MCF 10A (cell line): ENCODE measurements at regions of chr4 and their contacts with region 1.

Region 1: DNA sequence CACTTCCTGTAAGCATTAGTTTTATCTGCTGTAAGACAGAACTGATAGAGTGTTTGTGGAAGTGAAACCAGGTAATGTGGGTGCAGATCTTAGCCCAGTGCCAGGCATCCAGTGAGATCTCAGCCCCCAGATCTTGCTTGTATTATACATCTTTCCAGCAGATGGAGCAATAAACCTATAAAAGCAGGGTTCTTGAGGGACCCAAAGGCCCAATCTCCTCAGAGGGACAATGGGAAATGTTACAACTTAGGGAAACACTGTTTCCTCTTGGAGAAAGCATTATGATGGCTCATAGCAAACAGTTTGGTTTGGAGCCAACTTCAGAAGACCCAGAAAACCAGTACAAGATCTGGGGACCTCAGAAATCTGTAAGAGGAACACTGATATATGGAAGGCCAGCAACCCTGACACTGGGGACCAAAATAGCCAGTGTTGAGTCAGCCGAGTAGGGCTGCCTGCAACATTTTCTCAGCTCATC is 206.3 kb downstream of the SLC7A11 start:
- DNase-seq: peak; percentile 72
- H3K4me3 Mint-ChIP-seq: no peak overlapping the region
- H3K27ac Mint-ChIP-seq: peak overlapping the region; percentile 35
- H3K4me1 Mint-ChIP-seq: peaks cover 19% of the 10 kb centered on the region
- H3K27me3 Mint-ChIP-seq: no peaks in the 10 kb centered on the region
- CTCF ChIP-seq: peak; percentile 69

Region 2: GRCh38 chr4:137310593-137311490 is 725.0 kb before region 1 on chr4:
- CTCF ChIA-PET with region 1: no interaction called
- POLR2A ChIA-PET with region 1: no interaction called
- intact Hi-C with region 1: no loop called
- DNase-seq: peak; percentile 46
- H3K4me3 Mint-ChIP-seq: no peak overlapping the region
- H3K27ac Mint-ChIP-seq: peak overlapping the region; percentile 97
- H3K4me1 Mint-ChIP-seq: peaks cover 33% of the 10 kb centered on the region
- H3K27me3 Mint-ChIP-seq: no peaks in the 10 kb centered on the region
- CTCF ChIP-seq: no peak

Region 3: DNA sequence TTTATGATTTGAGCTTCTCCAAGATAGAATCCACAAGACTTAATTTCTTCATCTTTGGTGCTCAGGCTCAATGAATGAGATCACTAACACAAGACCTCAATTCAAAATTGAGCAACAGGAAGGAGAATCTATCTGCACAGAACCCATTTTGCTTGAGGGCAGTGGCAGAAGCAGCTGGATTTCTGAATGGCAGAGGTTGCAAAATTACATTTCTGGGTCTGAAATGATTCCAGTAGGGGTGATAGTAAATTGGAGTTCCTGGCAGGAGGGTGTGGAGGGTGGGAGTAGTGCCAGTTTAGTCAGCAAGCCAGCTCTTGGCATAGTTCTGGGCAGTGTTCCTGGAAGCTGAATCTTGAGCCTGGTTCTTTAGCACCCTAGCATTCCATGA is 74.8 kb before region 1 on chr4:
- CTCF ChIA-PET with region 1: interaction called, 6 read pairs
- POLR2A ChIA-PET with region 1: interaction called, 15 read pairs
- intact Hi-C with region 1: loop called (anchors 2 kb)
- DNase-seq: peak; percentile 98
- H3K4me3 Mint-ChIP-seq: peak overlapping the region; percentile 66
- H3K27ac Mint-ChIP-seq: peak overlapping the region; percentile 97
- H3K4me1 Mint-ChIP-seq: peaks cover 42% of the 10 kb centered on the region
- H3K27me3 Mint-ChIP-seq: no peaks in the 10 kb centered on the region
- CTCF ChIP-seq: no peak

Region 4: GRCh38 chr4:137998666-137999429 is 37.0 kb before region 1 on chr4:
- CTCF ChIA-PET with region 1: no interaction called
- POLR2A ChIA-PET with region 1: no interaction called
- intact Hi-C with region 1: no loop called
- DNase-seq: no peak
- H3K4me3 Mint-ChIP-seq: no peak overlapping the region
- H3K27ac Mint-ChIP-seq: no peak overlapping the region
- H3K4me1 Mint-ChIP-seq: peaks cover 6% of the 10 kb centered on the region
- H3K27me3 Mint-ChIP-seq: no peaks in the 10 kb centered on the region
- CTCF ChIP-seq: no peak

Region 5: DNA sequence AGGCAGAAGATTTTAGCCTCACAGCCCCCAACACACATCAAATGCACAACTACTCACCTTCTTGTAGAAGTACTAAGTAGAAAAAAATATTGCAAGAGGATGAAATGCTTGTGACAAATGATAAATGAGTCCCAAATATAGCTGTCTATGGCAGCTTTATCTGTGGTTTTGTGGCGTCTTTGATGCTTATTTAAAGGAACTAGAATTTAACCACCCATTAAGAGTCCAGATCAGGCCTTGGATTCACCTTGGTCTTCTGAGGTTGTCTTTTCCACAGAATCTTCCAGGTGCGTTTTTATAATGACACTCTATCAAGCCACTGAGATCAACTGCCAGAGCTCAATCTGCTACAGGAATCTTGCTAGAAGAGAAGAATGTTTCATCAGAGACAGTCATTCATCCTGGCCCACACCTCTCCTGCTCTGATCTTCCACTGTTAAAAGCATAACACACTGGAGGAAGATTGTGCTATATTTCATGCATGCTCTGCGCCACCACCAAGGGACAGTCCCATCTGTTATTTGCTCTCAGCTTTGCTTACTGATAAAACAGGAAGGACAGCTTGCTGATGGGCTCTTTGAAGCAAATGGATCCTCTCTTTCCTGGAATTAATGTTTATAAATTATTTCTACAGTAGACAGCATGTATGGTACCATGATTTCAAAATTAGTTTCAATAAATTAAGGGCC is 62.2 kb after region 1 on chr4:
- CTCF ChIA-PET with region 1: interaction called, 31 read pairs
- POLR2A ChIA-PET with region 1: no interaction called
- intact Hi-C with region 1: no loop called
- DNase-seq: no peak
- H3K4me3 Mint-ChIP-seq: no peak overlapping the region
- H3K27ac Mint-ChIP-seq: no peak overlapping the region
- H3K4me1 Mint-ChIP-seq: no peaks in the 10 kb centered on the region
- H3K27me3 Mint-ChIP-seq: no peaks in the 10 kb centered on the region
- CTCF ChIP-seq: no peak

Region 6: DNA sequence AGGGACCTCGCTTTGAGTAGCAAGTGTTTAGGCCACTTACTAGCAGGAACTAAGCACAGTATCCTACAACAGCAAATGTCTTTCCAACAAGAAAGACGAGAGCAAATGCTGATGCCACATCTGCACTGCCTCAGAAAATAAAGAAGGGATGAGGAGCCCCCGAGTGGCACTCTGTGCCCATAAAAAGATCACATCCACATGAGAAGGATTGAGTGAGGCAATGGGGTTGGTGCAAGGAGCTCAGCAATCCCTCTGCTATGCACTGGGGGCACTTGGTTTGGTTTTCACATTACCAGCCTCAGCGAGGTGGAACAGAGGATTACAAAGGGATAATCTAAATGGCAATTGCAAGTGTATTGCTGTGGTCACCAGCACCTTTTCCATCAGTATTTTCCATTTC is 459.1 kb after region 1 on chr4:
- CTCF ChIA-PET with region 1: interaction called, 3 read pairs
- POLR2A ChIA-PET with region 1: no interaction called
- intact Hi-C with region 1: loop called (anchors 2 kb)
- DNase-seq: peak; percentile 60
- H3K4me3 Mint-ChIP-seq: no peak overlapping the region
- H3K27ac Mint-ChIP-seq: no peak overlapping the region
- H3K4me1 Mint-ChIP-seq: no peaks in the 10 kb centered on the region
- H3K27me3 Mint-ChIP-seq: no peaks in the 10 kb centered on the region
- CTCF ChIP-seq: peak; percentile 41

Region 7: GRCh38 chr4:138680989-138681604 is 645.3 kb after region 1 on chr4:
- CTCF ChIA-PET with region 1: interaction called, 27 read pairs
- POLR2A ChIA-PET with region 1: no interaction called
- intact Hi-C with region 1: loop called (anchors 1 kb)
- DNase-seq: peak; percentile 88
- H3K4me3 Mint-ChIP-seq: no peak overlapping the region
- H3K27ac Mint-ChIP-seq: no peak overlapping the region
- H3K4me1 Mint-ChIP-seq: peaks cover 6% of the 10 kb centered on the region
- H3K27me3 Mint-ChIP-seq: peaks cover 10% of the 10 kb centered on the region
- CTCF ChIP-seq: peak; percentile 78